AG04450 (cell line): ENCODE measurements at regions of chr7 and their contacts with region 1.

Region 1: GRCh38 chr7:30983042-30983913 is 19.5 kb downstream of the GHRHR start:
- DNase-seq: peak; percentile 53
- H3K4me3 ChIP-seq: no peak overlapping the region
- H3K27ac ChIP-seq: no peak overlapping the region
- H3K27me3 ChIP-seq: peaks cover 21% of the 10 kb centered on the region
- CTCF ChIP-seq: peak; percentile 91

Region 2: GRCh38 chr7:30931161-30931928 is 51.9 kb before region 1 on chr7:
- CTCF ChIA-PET with region 1: interaction called, 14 read pairs
- POLR2A ChIA-PET with region 1: no interaction called
- DNase-seq: no peak
- H3K4me3 ChIP-seq: no peak overlapping the region
- H3K27ac ChIP-seq: no peak overlapping the region
- H3K27me3 ChIP-seq: peaks cover 17% of the 10 kb centered on the region
- CTCF ChIP-seq: no peak

Region 3: DNA sequence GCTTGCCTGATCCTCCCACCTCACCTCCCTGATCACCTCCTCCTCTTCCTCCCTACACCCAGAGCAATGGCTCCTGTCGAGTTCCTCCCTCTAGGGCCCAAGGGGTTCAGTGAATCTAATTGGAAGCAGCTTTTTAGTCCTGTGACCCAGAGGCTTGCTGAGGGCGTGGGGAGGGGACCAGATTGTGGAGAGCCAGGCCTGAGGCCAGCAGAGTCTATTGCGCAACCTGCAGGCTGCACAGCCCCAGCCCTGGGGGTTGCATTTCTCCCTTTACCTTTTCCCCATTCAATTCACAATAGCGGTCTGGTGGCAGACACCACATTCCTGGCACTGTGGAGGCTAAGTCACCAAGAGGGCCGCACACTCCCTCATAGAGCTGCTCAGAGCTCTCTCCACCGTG is 13.0 kb after region 1 on chr7:
- CTCF ChIA-PET with region 1: interaction called, 29 read pairs
- POLR2A ChIA-PET with region 1: no interaction called
- DNase-seq: no peak
- H3K4me3 ChIP-seq: no peak overlapping the region
- H3K27ac ChIP-seq: no peak overlapping the region
- H3K27me3 ChIP-seq: peaks cover 4% of the 10 kb centered on the region
- CTCF ChIP-seq: no peak

Region 4: DNA sequence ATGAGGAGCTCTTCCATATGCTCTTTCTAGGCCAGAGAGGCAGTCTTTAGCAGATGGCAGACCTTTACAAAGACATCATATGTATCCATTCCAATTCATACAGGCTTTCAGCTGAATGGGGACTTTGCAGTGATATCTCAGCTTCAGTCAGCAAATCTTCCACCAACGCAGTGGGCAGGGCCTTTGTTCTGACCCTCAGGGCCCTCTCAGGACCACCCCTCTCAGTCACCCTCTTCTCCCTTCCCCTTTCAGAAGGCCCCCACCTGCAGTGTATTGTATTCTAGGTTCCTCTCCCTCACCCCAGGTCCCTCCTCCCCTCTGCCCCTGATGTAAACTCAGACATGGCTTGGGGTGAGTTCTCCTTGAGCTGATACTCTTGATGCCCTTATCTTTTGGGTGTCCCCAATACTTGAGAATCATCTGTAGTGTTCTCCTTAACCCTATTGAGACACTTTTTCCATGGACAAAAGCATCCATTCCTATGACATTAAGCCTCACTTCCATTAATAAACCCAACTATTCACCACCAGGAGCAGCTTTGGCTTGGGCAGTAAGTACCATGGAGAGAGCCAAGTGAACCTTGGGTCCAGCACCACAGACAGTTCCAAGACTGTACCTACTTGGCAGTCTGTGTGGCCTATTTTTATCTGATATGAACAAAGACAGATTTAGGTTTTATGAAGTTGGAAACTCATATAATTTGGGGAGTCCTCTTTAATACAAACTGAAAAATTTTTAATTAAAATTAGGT is 131.5 kb after region 1 on chr7:
- CTCF ChIA-PET with region 1: interaction called, 338 read pairs
- POLR2A ChIA-PET with region 1: no interaction called
- DNase-seq: no peak
- H3K4me3 ChIP-seq: no peak overlapping the region
- H3K27ac ChIP-seq: no peak overlapping the region
- H3K27me3 ChIP-seq: no peaks in the 10 kb centered on the region
- CTCF ChIP-seq: no peak

Region 5: GRCh38 chr7:31134246-31135188 is 151.2 kb after region 1 on chr7:
- CTCF ChIA-PET with region 1: interaction called, 57 read pairs
- POLR2A ChIA-PET with region 1: no interaction called
- DNase-seq: peak; percentile 23
- H3K4me3 ChIP-seq: no peak overlapping the region
- H3K27ac ChIP-seq: no peak overlapping the region
- H3K27me3 ChIP-seq: no peaks in the 10 kb centered on the region
- CTCF ChIP-seq: peak; percentile 72